Dorsolateral prefrontal cortex (tissue), 120 donors: ENCODE measurements at regions of chr11 and their contacts with region 1.

Region 1: GRCh38 chr11:86938900-86939880 is 16.0 kb downstream of the FZD4 start:
- DNase-seq: no peak
- H3K4me3 ChIP-seq: peak overlapping the region in 2 of 59 donors; percentile 1 to 5
- H3K27ac ChIP-seq: peak overlapping the region in 16 of 59 donors; percentile 1 to 81 (median 54)
- H3K27me3 ChIP-seq: no peaks in the 10 kb centered on the region
- CTCF ChIP-seq: peak; percentile 56 to 90 (median 77)

Region 2: GRCh38 chr11:87290304-87290922 is 351.2 kb after region 1 on chr11:
- intact Hi-C with region 1: loop called (anchors 2 to 5 kb)
- DNase-seq: no peak
- H3K4me3 ChIP-seq: no peak overlapping the region
- H3K27ac ChIP-seq: no peak overlapping the region
- H3K27me3 ChIP-seq: no peaks in the 10 kb centered on the region
- CTCF ChIP-seq: peak; percentile 58 to 97 (median 80)

Region 3: DNA sequence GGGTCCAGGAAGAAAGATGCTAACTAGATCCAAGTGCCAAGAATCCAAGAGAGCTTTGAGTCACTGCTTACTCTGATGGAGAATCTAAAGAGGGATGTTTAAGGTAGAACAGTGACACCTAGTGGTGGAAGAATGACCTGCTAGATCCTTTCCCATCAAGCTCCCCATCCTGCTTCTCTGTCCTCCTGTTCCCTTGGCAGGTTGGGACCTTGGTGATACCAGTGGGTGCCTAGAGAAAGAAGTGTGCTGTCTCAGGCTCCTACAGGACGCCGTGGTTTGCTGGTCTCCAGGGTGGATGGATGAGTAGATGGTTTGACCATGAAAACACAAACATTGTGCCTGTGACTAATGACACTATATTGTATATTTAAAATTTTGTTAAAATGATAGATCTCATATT is 482.2 kb after region 1 on chr11:
- intact Hi-C with region 1: loop called in 1 of 2 experiments (anchors 5 kb)
- DNase-seq: peak in 2 of 10 donors; percentile 19 to 22
- H3K4me3 ChIP-seq: no peak overlapping the region
- H3K27ac ChIP-seq: no peak overlapping the region
- H3K27me3 ChIP-seq: no peaks in the 10 kb centered on the region
- CTCF ChIP-seq: peak; percentile 67 to 92 (median 83)